Endothelial cell of umbilical vein (primary cell): ENCODE measurements at regions of chr2 and their contacts with region 1.

Region 1: GRCh38 chr2:219294356-219295351 is 14.5 kb downstream of the PTPRN start:
- DNase-seq: peak; percentile 87
- H3K4me3 ChIP-seq: peak overlapping the region; percentile 40 to 46 (median 40)
- H3K27ac ChIP-seq: no peak overlapping the region
- H3K4me1 ChIP-seq: peaks cover 4% of the 10 kb centered on the region
- H3K27me3 ChIP-seq: peaks cover 0 to 2% of the 10 kb centered on the region in 2 experiments
- CTCF ChIP-seq: peak; percentile 95 to 98
- POLR2A ChIP-seq: peak; percentile 64

Region 2: DNA sequence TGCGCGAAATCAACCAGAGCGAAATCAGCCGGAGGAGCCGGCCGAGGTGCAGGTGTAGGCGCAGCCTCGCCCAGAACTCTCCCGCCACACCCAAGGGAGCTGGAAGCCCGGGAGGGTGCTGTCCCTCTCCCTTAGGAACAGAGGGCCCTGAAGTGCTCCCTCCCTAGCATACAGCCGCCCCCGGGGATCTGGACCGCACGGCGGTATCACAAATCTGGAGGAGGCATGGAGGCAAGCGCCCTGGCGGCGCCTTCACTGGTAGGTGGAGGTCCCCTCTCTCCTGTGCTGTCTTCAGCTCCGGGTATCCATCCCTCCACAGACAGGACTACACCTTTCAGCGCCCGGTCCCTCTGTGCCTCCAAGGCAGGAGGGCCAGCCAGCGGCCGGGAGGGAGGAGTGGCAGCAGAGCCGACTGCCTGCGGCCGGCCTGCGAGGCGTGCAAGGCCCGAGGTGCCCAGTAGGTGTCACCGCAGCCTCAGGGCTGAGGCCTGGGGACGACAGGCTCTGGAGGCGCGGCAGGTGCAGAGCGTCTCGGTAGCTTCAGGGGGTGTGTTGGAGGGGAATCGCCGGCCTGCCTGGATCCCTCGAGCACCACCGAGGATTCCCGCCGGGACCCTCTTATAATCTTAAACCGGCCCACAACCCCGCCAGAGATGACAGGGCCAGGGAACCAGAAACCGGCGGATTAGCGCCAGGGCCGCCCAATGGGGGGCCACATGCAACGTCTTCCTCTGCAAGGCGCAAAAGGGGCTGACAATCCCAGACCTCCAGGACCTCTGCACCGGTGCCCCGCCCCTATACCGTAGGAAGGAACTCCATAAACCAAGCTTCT is 236.7 kb before region 1 on chr2:
- CTCF ChIA-PET with region 1: interaction called, 7 read pairs
- POLR2A ChIA-PET with region 1: no interaction called
- dilution Hi-C with region 1: no loop called
- intact Hi-C with region 1: loop called (anchors 1 kb)
- DNase-seq: peak; percentile 60
- H3K4me3 ChIP-seq: no peak overlapping the region
- H3K27ac ChIP-seq: no peak overlapping the region
- H3K4me1 ChIP-seq: no peaks in the 10 kb centered on the region
- H3K27me3 ChIP-seq: peaks cover 52 to 66% of the 10 kb centered on the region in 2 experiments
- CTCF ChIP-seq: peak; percentile 85 to 94
- POLR2A ChIP-seq: no peak

Region 3: DNA sequence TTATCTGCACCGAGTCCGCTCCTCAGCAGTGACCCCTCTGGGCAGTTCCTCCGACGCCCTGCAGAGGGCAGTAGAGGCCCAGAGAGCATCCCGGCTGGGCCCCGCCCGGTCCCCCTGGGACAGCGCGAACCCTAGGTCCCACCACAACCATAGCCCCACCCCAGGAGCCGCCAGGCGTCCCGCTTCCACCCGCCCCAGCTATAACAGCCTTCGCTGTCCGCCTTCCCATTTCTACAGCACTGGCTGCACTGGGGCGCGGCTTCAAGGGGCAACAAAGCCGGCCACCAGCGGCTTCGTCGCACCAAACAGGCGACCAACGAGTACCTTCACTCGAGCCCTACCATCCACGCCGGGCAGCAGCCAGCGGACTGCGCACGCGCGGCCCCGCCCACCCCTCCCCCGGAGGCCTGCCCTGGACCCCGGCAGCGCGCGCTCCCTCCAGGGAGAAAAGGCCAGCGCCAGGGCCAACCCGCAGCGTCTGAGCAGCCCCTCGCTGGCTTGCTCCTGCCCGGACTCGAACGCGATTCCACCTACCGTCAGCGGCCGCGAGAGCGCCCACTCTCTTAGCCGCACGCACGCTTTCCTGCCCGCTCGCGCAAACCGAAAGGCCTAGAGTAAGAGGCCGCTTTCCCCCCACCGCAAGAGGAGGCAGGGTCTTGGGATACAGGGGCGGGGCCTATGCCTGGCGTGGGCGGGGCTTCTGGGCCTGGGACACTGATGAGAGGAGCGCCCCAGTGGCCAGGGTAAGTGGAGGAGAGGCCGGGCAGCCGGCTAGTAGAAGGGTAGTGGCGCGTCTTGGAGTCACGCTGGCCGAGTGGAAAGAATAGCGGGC is 134.3 kb before region 1 on chr2 and contains the start of gene NHEJ1:
- CTCF ChIA-PET with region 1: interaction called, 26 read pairs
- POLR2A ChIA-PET with region 1: no interaction called
- dilution Hi-C with region 1: no loop called
- intact Hi-C with region 1: loop called (anchors 1 kb)
- DNase-seq: peak; percentile 96
- H3K4me3 ChIP-seq: peak within 1 kb of the TSS; percentile 24 to 89 (median 41)
- H3K27ac ChIP-seq: no peak within 1 kb of the TSS
- H3K4me1 ChIP-seq: peaks cover 10% of the 10 kb centered on the region
- H3K27me3 ChIP-seq: no peaks in the 10 kb centered on the region
- CTCF ChIP-seq: peak; percentile 96 to 99
- POLR2A ChIP-seq: peak; percentile 76
- total RNA-seq, gene NHEJ1: 12.1 and 12.9 TPM in 2 replicates

Region 4: DNA sequence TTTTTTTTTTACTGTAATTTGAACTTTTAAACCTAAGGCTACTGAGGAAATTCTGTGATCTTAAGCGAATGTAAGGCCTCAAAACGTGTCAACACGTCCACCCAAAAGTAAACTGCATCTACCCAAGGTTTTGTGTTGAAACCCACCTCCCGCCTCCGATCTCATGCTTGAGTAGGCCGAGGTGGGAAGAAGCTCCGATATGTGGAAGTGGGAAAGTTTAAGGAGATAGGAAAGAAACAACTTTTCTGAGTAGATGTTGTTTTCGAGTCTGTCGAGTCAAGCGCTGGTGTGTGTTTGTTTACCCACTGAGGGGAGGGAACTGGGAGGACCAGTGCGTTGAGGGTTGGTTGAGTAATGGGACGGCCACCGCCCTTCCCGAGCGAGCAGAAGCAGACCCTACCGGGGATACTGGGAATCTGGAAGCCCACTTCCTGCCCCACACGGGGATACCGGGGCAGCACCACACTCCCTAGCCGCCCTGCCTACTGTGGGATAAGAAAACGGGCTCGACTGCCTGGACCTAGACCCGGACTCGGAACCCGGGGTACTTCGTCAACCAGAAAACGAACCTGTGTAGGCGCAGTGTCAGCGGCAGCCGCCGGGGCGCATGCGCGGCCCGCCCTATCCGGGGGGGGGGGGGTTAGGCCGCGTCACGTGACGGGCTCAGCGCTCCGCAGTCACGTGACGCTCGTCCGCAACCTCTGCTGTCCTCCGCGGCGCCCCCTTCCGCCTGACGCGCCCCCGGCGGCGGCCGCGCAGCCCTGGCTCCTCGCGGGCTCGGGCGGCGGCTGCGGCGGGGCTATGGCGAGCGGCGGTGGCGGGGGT is 116.9 kb before region 1 on chr2 and contains the start of gene RETREG2:
- CTCF ChIA-PET with region 1: interaction called, 32 read pairs
- POLR2A ChIA-PET with region 1: no interaction called
- dilution Hi-C with region 1: no loop called
- intact Hi-C with region 1: loop called (anchors 2 kb)
- DNase-seq: peak; percentile 93
- H3K4me3 ChIP-seq: peak within 1 kb of the TSS; percentile 44 to 81 (median 67)
- H3K27ac ChIP-seq: peak within 1 kb of the TSS; percentile 62
- H3K4me1 ChIP-seq: peaks cover 18% of the 10 kb centered on the region
- H3K27me3 ChIP-seq: no peaks in the 10 kb centered on the region
- CTCF ChIP-seq: peak in 1 of 2 donors; percentile 25
- POLR2A ChIP-seq: peak; percentile 97
- total RNA-seq, gene RETREG2: 58.2 and 59.5 TPM in 2 replicates

Region 5: DNA sequence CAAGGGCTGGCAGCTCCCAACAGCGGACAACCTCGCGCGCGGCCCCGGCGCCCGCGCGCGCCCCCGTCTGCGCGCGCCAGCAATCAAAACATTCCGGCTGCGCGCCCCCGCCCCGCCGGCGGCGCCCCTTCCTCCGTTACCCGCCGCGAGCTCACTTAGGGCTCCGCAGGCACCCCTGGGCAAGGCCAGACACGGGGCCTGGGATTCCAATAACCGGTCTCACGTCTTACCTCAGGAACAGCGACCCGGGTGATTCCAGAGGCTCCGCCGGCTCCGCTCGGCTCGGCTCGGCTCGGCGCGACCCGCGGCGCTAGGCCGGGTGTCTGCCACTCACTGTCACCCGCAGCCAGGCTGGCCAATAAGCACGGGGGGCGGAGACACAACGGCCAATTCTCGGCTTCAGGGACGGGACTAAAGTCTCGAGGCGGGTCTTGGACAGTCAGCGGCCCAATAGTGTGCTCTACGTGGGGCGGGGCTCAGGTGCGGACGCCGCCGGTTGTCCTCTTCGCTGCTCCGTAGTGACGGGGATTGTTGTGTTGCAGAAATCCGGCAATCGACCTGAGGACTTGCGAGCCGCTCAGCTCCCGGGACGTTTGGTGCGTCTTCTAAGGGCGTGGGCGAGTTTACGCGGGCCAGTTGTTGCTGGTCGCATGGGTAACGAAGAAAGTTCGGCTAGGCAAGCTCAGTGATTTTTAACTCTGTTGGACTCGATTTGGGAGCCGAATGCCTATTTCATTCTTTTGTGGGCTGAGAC is 65.2 kb before region 1 on chr2 and contains the starts of genes ANKZF1 and ATG9A:
- CTCF ChIA-PET with region 1: interaction called, 19 read pairs
- POLR2A ChIA-PET with region 1: no interaction called
- dilution Hi-C with region 1: no loop called
- intact Hi-C with region 1: loop called (anchors 1 kb)
- DNase-seq: peak; percentile 100
- H3K4me3 ChIP-seq: peak within 1 kb of the TSS; percentile 70 to 76 (median 70)
- H3K27ac ChIP-seq: peak within 1 kb of the TSS; percentile 76
- H3K4me1 ChIP-seq: peaks cover 15% of the 10 kb centered on the region
- H3K27me3 ChIP-seq: no peaks in the 10 kb centered on the region
- CTCF ChIP-seq: no peak
- POLR2A ChIP-seq: peak; percentile 85
- total RNA-seq, gene ANKZF1: 34.0 and 36.2 TPM in 2 replicates
- total RNA-seq, gene ATG9A: 62.2 and 65.5 TPM in 2 replicates

Region 6: DNA sequence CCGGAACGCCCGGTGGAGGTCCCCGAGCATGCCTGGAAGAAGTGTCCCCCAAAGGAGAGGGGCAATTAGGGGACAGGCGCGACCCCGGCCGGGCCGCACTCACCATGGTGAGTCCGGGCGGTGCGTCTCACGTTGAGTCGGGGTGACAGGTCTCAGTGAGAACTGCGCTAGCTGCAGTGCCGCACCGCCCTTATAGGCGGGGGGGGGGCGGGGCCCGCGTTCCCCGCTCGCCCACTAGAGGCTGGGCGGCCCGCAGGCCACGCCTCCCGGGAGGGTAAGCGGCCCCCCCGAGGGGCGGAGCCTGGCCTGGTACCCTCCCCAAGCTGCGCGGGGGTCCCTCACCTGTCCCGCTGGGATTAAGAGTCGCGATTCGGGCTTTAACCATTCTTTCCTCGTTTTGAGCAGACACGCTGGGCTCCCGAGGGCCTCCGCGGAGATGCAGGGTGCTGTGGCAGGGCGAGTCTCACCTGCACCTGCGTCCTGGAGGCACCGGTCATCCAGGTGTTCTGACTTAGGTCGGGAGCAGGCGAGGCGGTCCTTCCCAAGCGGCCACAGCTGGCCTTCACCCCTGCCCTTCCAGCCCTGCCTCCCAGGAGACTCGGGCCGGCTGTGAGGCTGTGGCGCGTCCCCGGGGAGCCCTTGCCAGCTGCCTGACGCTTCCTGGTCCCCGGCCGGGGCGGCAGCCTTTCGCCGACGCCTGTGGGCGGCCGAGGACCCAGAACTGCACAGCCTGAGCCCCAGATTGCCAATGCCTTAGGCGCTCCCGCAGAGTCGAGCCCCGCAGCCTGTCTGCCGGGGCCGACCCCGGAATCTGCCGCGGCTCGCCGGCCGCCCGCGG is 40.7 kb before region 1 on chr2 and contains the start of gene TUBA4A:
- CTCF ChIA-PET with region 1: interaction called, 25 read pairs
- POLR2A ChIA-PET with region 1: no interaction called
- dilution Hi-C with region 1: no loop called
- intact Hi-C with region 1: loop called (anchors 2 kb)
- DNase-seq: peak; percentile 67
- H3K4me3 ChIP-seq: peak within 1 kb of the TSS; percentile 32 to 53 (median 34)
- H3K27ac ChIP-seq: no peak within 1 kb of the TSS
- H3K4me1 ChIP-seq: peaks cover 36% of the 10 kb centered on the region
- H3K27me3 ChIP-seq: peaks cover 15 to 16% of the 10 kb centered on the region in 2 experiments
- CTCF ChIP-seq: no peak
- POLR2A ChIP-seq: no peak
- total RNA-seq, gene TUBA4A: 10.7 and 16.5 TPM in 2 replicates

Region 7: DNA sequence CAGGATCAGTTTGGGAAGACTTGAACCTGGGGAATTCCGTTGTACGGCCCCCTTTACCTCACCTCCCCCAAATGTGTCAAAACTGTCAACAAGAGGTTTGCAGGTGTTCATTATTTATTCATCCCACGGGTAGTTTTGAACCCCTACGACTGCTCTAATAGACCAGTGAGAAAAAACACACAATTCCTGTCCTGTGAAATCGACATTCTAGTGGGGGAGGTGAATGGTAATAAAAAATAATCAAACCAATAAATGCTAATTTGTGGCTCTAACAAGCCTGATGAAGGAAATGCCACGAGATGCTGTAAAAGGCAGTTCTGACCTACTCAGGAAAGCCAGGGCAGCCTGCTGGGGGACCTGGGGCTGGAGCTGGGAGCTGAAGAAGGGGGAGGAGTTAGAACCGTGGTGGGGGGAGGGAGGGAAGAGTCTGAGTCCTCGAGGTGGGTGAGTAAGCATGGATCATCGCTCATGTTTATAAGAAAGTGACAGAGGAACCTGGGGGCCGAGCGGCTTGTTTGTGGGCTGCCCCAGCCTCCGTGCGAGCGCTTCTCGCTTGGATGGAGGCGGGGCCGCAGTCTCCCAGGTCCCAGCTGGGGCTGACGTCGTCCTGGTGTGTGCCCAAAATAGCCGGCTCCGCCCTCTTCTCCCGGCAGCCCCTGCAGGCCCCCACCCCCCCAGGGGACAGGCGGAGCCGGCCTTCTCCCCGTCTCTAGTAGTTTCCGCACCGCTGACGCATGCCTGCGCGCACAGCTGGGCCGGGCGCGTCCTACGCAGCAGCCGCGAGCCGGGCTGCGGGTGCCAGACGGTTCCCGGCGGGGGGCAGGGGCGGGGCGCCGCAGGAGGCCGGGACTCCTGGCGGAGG is 15.8 kb before region 1 on chr2 and contains the start of gene DNAJB2:
- CTCF ChIA-PET with region 1: interaction called, 253 read pairs
- POLR2A ChIA-PET with region 1: no interaction called
- dilution Hi-C with region 1: no loop called
- intact Hi-C with region 1: loop called (anchors 1 kb)
- DNase-seq: peak; percentile 99
- H3K4me3 ChIP-seq: peak within 1 kb of the TSS; percentile 9 to 55 (median 47)
- H3K27ac ChIP-seq: peak within 1 kb of the TSS; percentile 85
- H3K4me1 ChIP-seq: peaks cover 17% of the 10 kb centered on the region
- H3K27me3 ChIP-seq: no peaks in the 10 kb centered on the region
- CTCF ChIP-seq: no peak
- POLR2A ChIP-seq: peak; percentile 93
- total RNA-seq, gene DNAJB2: 27.3 and 30.4 TPM in 2 replicates

Region 8: GRCh38 chr2:219402665-219403515 is 108.2 kb after region 1 on chr2:
- CTCF ChIA-PET with region 1: no interaction called
- POLR2A ChIA-PET with region 1: no interaction called
- dilution Hi-C with region 1: no loop called
- intact Hi-C with region 1: no loop called
- DNase-seq: peak; percentile 64
- H3K4me3 ChIP-seq: no peak overlapping the region
- H3K27ac ChIP-seq: no peak overlapping the region
- H3K4me1 ChIP-seq: peaks cover 2% of the 10 kb centered on the region
- H3K27me3 ChIP-seq: peaks cover 0 to 1% of the 10 kb centered on the region in 2 experiments
- CTCF ChIP-seq: peak; percentile 90 to 91
- POLR2A ChIP-seq: no peak